ENCODE measurements at regions of chr6 and their contacts with region 1.

Region 1: GRCh38 chr6:43174263-43175112 is 3.4 kb downstream of the SRF start:
- DNase-seq: peak; percentile 98
- ATAC-seq: peak; percentile 83
- H3K4me3 ChIP-seq: peak overlapping the region; percentile 94
- H3K27ac ChIP-seq: peak overlapping the region; percentile 92
- H3K4me1 ChIP-seq: peaks cover 26% of the 10 kb centered on the region
- H3K27me3 ChIP-seq: no peaks in the 10 kb centered on the region
- CTCF ChIP-seq: 0 out of 6 replicates have a peak, but pooled peaks of 1 of the 3 experiments have one; percentile 12
- EP300 ChIP-seq: peak; percentile 41 to 70; a peak in 1 of 4 replicates
- POLR2A ChIP-seq: peak; percentile 61; the same call in 1 of the 2 replicates
- RAD21 ChIP-seq: no peak

Region 2: GRCh38 chr6:42131531-42131930 is 1043.0 kb before region 1 on chr6:
- CTCF ChIA-PET with region 1: no interaction called
- POLR2A ChIA-PET with region 1: no interaction called
- RAD21 ChIA-PET with region 1: no interaction called
- SMC1A ChIA-PET with region 1: no interaction called
- in situ Hi-C with region 1: no loop called
- intact Hi-C with region 1: no loop called
- DNase-seq: no peak
- ATAC-seq: no peak
- H3K4me3 ChIP-seq: no peak overlapping the region
- H3K27ac ChIP-seq: no peak overlapping the region
- H3K4me1 ChIP-seq: peaks cover 2% of the 10 kb centered on the region; the same call in 1 of the 2 replicates
- H3K27me3 ChIP-seq: no peaks in the 10 kb centered on the region; a peak in 2 of 4 replicates
- CTCF ChIP-seq: no peak
- EP300 ChIP-seq: no peak
- POLR2A ChIP-seq: no peak
- RAD21 ChIP-seq: no peak

Region 3: GRCh38 chr6:42782622-42783176 is 391.8 kb before region 1 on chr6:
- CTCF ChIA-PET with region 1: no interaction called
- POLR2A ChIA-PET with region 1: interaction called, 3 read pairs
- RAD21 ChIA-PET with region 1: no interaction called
- SMC1A ChIA-PET with region 1: no interaction called
- in situ Hi-C with region 1: no loop called
- intact Hi-C with region 1: loop called (anchors 10 kb)
- DNase-seq: no peak
- ATAC-seq: peak; percentile 41
- H3K4me3 ChIP-seq: peak overlapping the region; percentile 86
- H3K27ac ChIP-seq: peak overlapping the region; percentile 99
- H3K4me1 ChIP-seq: peaks cover 31% of the 10 kb centered on the region
- H3K27me3 ChIP-seq: no peaks in the 10 kb centered on the region
- CTCF ChIP-seq: no peak
- EP300 ChIP-seq: no peak
- POLR2A ChIP-seq: no peak
- RAD21 ChIP-seq: no peak

Region 4: DNA sequence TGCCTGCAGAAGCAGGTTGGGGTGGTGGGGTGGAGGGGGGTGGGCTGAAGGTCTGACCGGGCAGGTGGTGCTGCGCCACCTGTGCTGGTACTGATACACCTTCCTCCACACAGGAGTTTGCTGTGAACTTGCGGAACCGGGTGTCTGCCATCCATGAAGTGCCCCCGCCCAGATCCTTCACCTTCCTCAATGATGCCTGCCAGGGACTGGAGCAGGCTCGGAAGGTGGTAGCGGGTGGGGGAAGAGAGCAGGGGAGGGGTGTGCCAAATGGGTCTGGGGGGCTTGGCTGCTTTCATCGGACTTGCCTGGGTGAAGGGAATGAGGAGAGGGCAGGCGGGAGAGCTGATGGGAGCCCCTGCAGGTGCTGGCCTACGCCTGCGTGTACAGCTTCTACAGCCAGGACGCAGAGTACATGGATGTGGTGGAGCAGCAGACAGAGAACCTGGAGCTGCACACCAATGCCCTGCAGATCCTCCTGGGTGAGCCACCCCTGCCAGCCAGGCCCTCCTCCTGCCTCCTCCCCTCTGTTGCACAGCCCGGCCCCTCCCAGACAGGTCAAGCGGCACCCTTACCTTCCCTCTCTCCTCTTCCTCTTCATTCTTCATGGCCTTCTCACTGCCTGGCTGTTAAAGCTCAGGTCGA is 48.1 kb after region 1 on chr6:
- CTCF ChIA-PET with region 1: interaction called, 9 read pairs
- POLR2A ChIA-PET with region 1: interaction called, 26 read pairs
- RAD21 ChIA-PET with region 1: interaction called, 18 read pairs
- SMC1A ChIA-PET with region 1: interaction called, 10 read pairs
- in situ Hi-C with region 1: no loop called
- intact Hi-C with region 1: loop called (anchors 2 kb)
- DNase-seq: no peak
- ATAC-seq: no peak
- H3K4me3 ChIP-seq: no peak overlapping the region
- H3K27ac ChIP-seq: no peak overlapping the region
- H3K4me1 ChIP-seq: peaks cover 19% of the 10 kb centered on the region
- H3K27me3 ChIP-seq: no peaks in the 10 kb centered on the region
- CTCF ChIP-seq: no peak
- EP300 ChIP-seq: no peak
- POLR2A ChIP-seq: peak; percentile 11; the same call in 1 of the 2 replicates
- RAD21 ChIP-seq: no peak

Region 5: DNA sequence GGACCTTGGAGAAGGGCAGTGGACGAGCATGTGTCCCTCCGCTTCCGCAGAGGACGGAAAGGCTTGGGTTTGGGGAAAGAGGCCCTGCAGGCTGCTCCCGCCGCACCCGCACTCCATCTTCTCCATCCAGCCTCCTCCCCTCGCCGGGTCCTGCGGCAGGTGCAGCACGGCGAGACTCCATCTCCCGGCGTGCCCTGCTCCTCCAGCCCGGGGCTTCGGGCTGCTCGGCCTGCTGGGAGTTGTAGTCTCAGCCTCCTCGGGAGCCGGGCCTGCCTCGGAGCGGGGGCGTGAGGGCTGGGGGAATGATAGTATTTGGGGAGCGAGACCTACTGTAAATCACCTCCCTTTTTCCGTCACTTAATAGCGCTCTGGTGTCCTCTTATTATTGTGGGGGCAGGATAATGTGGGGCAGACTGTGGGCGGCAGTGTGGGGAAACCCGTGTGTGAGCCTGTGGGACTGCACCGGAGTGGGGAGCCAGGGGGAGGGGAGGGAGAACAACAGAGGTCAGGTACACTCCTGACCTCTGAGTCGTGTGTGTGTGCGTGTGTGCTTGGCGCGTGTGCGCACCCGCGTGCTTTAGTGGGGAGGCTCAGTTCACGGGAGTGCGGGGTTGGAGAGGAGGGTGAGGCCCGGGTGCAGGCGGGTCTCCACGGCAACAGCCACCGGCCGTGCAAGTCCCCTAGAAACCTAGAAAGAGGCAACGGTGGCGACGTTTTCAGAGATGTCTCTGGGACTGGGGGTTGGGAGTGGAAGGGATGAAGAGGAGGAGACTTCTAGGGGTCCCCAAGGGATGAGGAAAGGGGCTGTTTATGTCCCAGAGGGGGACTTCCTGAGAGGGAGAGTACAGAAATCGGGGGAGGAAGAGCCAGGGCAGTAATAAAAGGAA is 72.9 kb after region 1 on chr6:
- CTCF ChIA-PET with region 1: interaction called, 3 read pairs
- POLR2A ChIA-PET with region 1: interaction called, 3 read pairs
- RAD21 ChIA-PET with region 1: interaction called, 3 read pairs
- SMC1A ChIA-PET with region 1: interaction called, 3 read pairs
- in situ Hi-C with region 1: no loop called
- intact Hi-C with region 1: loop called (anchors 5 kb)
- DNase-seq: no peak
- ATAC-seq: peak; percentile 97
- H3K4me3 ChIP-seq: peak overlapping the region; percentile 73
- H3K27ac ChIP-seq: peak overlapping the region; percentile 46
- H3K4me1 ChIP-seq: peaks cover 27% of the 10 kb centered on the region
- H3K27me3 ChIP-seq: peaks cover 8 to 12% of the 10 kb centered on the region in 2 experiments
- CTCF ChIP-seq: no peak
- EP300 ChIP-seq: no peak
- POLR2A ChIP-seq: peak; percentile 60
- RAD21 ChIP-seq: no peak

Region 6: DNA sequence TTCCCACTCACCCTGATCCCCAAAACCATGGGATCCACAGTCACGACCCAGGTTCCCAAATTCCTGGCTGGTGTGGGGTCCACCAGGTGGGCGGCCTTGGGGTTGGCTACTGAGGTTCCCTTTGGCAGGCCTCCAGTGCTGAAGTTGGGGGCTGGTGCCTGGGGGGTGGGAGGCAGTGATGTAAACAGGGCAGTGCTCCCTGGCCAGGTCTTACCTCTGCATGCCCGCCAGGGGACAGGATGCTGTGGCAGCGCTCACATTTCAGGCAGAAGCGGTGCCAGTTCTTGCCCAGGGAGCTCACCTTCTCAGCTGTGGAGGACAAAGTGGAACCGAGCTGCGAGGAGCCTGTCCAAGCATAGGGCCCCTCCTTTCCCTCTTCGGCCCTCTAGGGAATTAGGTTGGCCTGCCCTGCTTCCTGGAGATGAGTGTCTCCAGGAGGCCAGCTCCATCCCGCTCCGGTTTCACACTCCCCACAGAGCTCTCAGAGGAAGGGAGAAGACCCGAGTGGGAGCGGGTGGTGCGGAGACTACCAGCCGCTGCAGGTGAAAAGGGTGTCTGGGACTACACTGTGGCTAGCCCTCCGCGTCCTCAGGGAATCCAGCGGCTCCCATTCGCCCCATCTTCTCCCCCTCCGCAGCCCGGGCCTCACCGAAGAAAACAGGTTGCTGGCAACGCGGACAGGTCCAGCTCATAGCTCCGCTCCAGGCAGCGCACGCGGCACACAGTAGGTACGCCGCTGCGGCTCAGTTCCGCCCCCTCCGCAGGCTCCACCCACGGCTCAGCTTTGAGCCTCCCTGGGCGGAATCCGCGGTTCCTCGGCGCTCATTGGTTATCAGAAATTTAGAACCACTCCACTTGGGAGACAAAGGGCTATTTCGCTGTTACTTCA is 133.9 kb after region 1 on chr6 and contains the start of gene CRIP3:
- CTCF ChIA-PET with region 1: no interaction called
- POLR2A ChIA-PET with region 1: no interaction called
- RAD21 ChIA-PET with region 1: no interaction called
- SMC1A ChIA-PET with region 1: no interaction called
- in situ Hi-C with region 1: no loop called
- intact Hi-C with region 1: no loop called
- DNase-seq: no peak
- ATAC-seq: peak; percentile 92
- H3K4me3 ChIP-seq: peak within 1 kb of the TSS; percentile 57; the same call in 1 of the 2 replicates
- H3K27ac ChIP-seq: no peak within 1 kb of the TSS
- H3K4me1 ChIP-seq: peaks cover 8% of the 10 kb centered on the region
- H3K27me3 ChIP-seq: no peaks in the 10 kb centered on the region
- CTCF ChIP-seq: peak; percentile 49 to 79 (median 50)
- EP300 ChIP-seq: no peak
- POLR2A ChIP-seq: no peak
- RAD21 ChIP-seq: 0 out of 2 replicates have a peak, but pooled peaks have one; percentile 8
- polyA plus RNA-seq, gene CRIP3: 1.7 to 2.3 TPM

Region 7: DNA sequence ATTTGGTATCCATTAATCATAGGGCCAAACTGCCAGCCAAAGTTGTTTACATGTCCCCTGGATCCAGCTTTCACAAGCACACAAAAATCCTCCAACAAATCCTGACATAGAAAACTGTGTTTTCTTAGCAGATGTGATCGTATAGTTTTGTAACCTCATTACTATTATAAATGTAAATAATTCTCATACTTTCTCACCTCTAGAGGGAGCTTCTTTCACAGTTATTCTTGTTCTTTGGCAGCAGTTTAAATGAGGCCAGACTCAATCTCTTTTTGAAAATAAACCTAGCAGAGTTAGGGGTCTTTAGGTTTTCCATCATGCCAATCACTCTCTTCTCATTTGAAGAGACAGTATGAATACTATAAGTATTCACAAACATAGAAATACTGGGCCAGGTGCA is 212.0 kb after region 1 on chr6:
- CTCF ChIA-PET with region 1: no interaction called
- POLR2A ChIA-PET with region 1: no interaction called
- RAD21 ChIA-PET with region 1: no interaction called
- SMC1A ChIA-PET with region 1: no interaction called
- in situ Hi-C with region 1: no loop called
- intact Hi-C with region 1: loop called (anchors 5 kb)
- DNase-seq: no peak
- ATAC-seq: no peak
- H3K4me3 ChIP-seq: no peak overlapping the region
- H3K27ac ChIP-seq: peak overlapping the region; percentile 86; the same call in 1 of the 2 replicates
- H3K4me1 ChIP-seq: peaks cover 41% of the 10 kb centered on the region
- H3K27me3 ChIP-seq: no peaks in the 10 kb centered on the region
- CTCF ChIP-seq: peak; percentile 20 to 47 (median 39); a peak in 4 of 6 replicates
- EP300 ChIP-seq: no peak
- POLR2A ChIP-seq: no peak
- RAD21 ChIP-seq: peak; percentile 54; the same call in 1 of the 2 replicates